PC-3 (cell line): ENCODE measurements at regions of chr2 and their contacts with region 1.

Region 1: DNA sequence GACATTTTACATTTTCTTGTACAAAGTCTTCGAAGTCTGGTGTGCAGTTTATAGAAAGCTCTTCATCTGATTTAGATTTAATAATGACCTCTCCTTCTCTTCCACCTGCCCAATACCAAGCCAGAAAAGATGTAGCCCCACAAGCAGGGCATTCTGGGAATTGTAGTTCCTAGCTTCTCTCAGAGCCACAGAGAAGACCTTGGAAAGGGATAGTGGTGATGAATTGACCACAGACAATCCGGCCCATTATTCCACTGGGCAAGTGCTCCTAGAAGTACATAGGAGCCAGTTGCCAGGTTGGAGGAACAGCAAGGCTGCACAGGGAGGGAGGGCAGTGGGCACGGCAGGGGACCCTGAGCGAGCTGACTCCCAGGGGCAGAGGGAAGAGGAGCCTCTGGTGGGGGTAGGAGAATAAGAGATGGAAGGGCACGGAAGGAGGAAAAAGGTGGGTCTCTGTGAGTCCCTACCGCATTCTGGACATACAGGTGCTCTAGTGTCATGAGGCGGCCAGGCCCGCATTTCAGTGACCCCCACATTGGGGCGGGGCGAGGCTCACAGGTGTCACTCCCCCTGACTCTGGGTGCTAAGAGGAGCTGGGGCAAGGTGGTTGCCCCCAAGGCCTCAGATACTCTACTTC is 152.5 kb upstream of the HAAO start:
- DNase-seq: peak; percentile 66
- ATAC-seq: peak; percentile 64
- H3K4me3 ChIP-seq: no peak overlapping the region
- H3K27ac ChIP-seq: no peak overlapping the region
- H3K4me1 ChIP-seq: no peaks in the 10 kb centered on the region
- H3K27me3 ChIP-seq: no peaks in the 10 kb centered on the region
- CTCF ChIP-seq: no peak

Region 2: DNA sequence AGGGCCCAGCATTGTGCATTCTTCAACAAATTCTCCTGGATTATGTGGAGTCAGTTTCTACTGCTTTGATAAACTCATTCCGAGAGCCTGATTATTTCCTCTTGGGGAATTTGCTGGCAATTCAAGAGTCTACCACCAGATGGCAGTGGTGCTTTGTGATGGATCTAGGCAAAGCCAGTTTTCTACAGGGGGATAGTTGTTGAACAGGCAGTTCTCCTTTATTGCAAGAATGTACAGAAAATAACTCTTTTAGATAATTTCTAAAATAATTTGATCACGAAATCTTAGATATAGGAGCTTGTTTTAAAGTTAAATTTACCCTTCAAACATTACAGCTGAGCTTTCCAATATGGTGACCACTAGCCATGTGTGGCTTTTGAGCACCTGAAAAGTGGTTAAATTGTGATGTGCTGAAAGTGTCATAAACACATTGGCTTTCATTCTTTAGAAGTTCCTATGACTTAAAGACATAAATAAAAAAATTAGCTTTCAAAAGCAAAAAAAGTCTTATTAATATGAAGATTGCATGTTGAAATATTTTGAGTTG is 85.8 kb before region 1 on chr2:
- CTCF ChIA-PET with region 1: no interaction called
- POLR2A ChIA-PET with region 1: no interaction called
- intact Hi-C with region 1: loop called (anchors 5 kb)
- DNase-seq: peak; percentile 90
- ATAC-seq: peak; percentile 45; the same call in 1 of the 2 replicates
- H3K4me3 ChIP-seq: no peak overlapping the region
- H3K27ac ChIP-seq: no peak overlapping the region
- H3K4me1 ChIP-seq: no peaks in the 10 kb centered on the region
- H3K27me3 ChIP-seq: no peaks in the 10 kb centered on the region
- CTCF ChIP-seq: peak; percentile 97

Region 3: DNA sequence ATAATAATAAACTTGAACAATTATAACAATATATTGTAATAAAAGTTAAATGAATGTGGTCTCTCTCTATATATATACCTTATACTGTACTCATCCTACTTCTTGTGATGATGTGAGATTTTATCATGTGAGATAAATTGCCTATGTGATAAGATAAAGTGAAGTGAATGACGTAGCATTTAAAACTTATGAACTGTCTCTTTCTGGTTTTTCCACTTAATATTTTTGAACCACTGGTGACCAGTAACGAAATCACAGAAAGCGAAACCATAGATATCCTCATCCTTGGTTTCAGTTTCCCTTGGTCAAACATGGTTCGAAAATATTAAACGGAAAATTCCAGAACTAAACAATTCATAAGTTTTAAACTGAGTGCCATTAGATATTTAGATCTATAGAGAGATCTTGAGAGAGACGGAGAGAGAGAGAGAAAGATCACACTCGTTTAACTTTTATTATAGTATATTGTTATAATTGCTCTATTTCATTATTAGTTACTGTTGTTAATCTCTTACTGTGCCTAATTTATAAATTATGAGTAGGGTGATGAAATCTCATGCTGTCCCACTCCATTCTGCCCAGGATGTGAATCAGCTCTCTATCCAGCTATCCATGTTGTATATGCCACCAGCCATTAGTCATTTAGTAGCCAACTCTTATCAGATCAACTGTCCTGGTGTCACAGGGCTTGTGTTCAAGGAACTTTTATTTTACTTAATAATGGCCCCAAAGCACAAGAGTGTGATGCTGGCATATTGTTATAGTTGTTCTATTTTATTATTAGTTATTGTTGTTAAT is 494.2 kb after region 1 on chr2:
- CTCF ChIA-PET with region 1: no interaction called
- POLR2A ChIA-PET with region 1: no interaction called
- intact Hi-C with region 1: no loop called
- DNase-seq: peak; percentile 60
- ATAC-seq: peak; percentile 58
- H3K4me3 ChIP-seq: no peak overlapping the region
- H3K27ac ChIP-seq: 0 out of 2 replicates have a peak overlapping the region, but pooled peaks have one; percentile 2
- H3K4me1 ChIP-seq: peaks cover 29% of the 10 kb centered on the region
- H3K27me3 ChIP-seq: no peaks in the 10 kb centered on the region
- CTCF ChIP-seq: no peak